Activated CD4-positive, alpha-beta T cell treated with anti-CD3 and anti-CD28 coated beads for 36 hours (primary cell): ENCODE measurements at regions of chrX and their contacts with region 1.

Region 1: GRCh38 chrX:148466292-148466691 is 34.1 kb upstream of the AFF2 start:
- DNase-seq: no peak
- ATAC-seq: peak; percentile 89
- H3K4me3 Mint-ChIP-seq: no peak overlapping the region
- H3K27ac Mint-ChIP-seq: no peak overlapping the region
- H3K4me1 Mint-ChIP-seq: peaks cover 17% of the 10 kb centered on the region
- H3K27me3 Mint-ChIP-seq: peaks cover 4% of the 10 kb centered on the region

Region 2: GRCh38 chrX:148282504-148282903 is 183.8 kb before region 1 on chrX:
- CTCF ChIA-PET with region 1: no interaction called
- POLR2A ChIA-PET with region 1: no interaction called
- intact Hi-C with region 1: loop called in 1 of 2 experiments (anchors 5 kb)
- DNase-seq: no peak
- ATAC-seq: peak; percentile 65
- H3K4me3 Mint-ChIP-seq: no peak overlapping the region
- H3K27ac Mint-ChIP-seq: peak overlapping the region; percentile 37
- H3K4me1 Mint-ChIP-seq: peaks cover 31% of the 10 kb centered on the region
- H3K27me3 Mint-ChIP-seq: no peaks in the 10 kb centered on the region

Region 3: GRCh38 chrX:148380650-148381561 is 85.4 kb before region 1 on chrX:
- CTCF ChIA-PET with region 1: no interaction called
- POLR2A ChIA-PET with region 1: no interaction called
- intact Hi-C with region 1: loop called (anchors 1 kb)
- DNase-seq: peak; percentile 66
- ATAC-seq: peak; percentile 96
- H3K4me3 Mint-ChIP-seq: peak overlapping the region; percentile 62
- H3K27ac Mint-ChIP-seq: peak overlapping the region; percentile 93
- H3K4me1 Mint-ChIP-seq: peaks cover 32% of the 10 kb centered on the region
- H3K27me3 Mint-ChIP-seq: no peaks in the 10 kb centered on the region

Region 4: GRCh38 chrX:148500423-148501385 is 34.4 kb after region 1 on chrX and contains the start of gene AFF2:
- CTCF ChIA-PET with region 1: no interaction called
- POLR2A ChIA-PET with region 1: no interaction called
- intact Hi-C with region 1: loop called (anchors 2 to 5 kb)
- DNase-seq: peak; percentile 71
- ATAC-seq: peak; percentile 80
- H3K4me3 Mint-ChIP-seq: peak within 1 kb of the TSS; percentile 73
- H3K27ac Mint-ChIP-seq: no peak within 1 kb of the TSS
- H3K4me1 Mint-ChIP-seq: peaks cover 14% of the 10 kb centered on the region
- H3K27me3 Mint-ChIP-seq: peaks cover 2% of the 10 kb centered on the region
- total RNA-seq, gene AFF2: 1.3 to 2.2 TPM

Region 5: GRCh38 chrX:148609515-148610327 is 143.4 kb after region 1 on chrX:
- CTCF ChIA-PET with region 1: no interaction called
- POLR2A ChIA-PET with region 1: no interaction called
- intact Hi-C with region 1: loop called in 1 of 2 experiments (anchors 2 kb)
- DNase-seq: peak; percentile 3
- ATAC-seq: peak; percentile 76
- H3K4me3 Mint-ChIP-seq: no peak overlapping the region
- H3K27ac Mint-ChIP-seq: no peak overlapping the region
- H3K4me1 Mint-ChIP-seq: peaks cover 24% of the 10 kb centered on the region
- H3K27me3 Mint-ChIP-seq: no peaks in the 10 kb centered on the region

Region 6: DNA sequence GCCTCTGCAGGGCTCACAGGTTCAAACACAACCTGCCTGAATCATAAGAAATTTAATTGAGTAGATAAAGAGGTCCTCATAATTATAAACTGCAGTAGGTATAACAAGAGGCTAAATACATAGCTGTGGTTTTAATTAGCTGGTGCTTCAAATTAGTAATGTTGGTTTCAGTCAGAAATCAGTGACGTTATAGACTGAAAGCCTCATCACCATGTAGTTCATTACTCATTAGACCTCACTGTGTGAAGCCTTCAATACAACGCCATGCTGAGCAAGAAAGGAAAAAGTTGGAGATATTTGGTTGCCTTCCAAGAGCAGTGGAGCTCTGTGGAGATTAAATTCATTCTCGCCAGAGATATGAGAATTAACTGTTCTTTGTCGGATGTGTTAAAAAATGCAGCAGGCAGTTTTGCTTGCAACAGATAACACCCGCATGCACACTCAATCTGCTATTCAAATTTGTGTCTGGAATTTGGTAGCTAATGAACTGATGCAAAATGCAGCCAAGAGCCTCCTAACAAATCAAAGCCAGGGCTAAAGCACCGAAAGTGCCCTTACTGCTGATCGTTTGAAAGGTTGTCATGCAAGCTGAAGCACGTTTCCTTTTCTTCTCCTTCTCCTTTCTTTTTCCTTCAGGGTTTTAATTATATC is 183.0 kb after region 1 on chrX:
- CTCF ChIA-PET with region 1: no interaction called
- POLR2A ChIA-PET with region 1: no interaction called
- intact Hi-C with region 1: no loop called
- DNase-seq: no peak
- ATAC-seq: no peak
- H3K4me3 Mint-ChIP-seq: no peak overlapping the region
- H3K27ac Mint-ChIP-seq: no peak overlapping the region
- H3K4me1 Mint-ChIP-seq: peaks cover 2% of the 10 kb centered on the region
- H3K27me3 Mint-ChIP-seq: no peaks in the 10 kb centered on the region

Region 7: GRCh38 chrX:148741441-148741840 is 275.1 kb after region 1 on chrX:
- CTCF ChIA-PET with region 1: no interaction called
- POLR2A ChIA-PET with region 1: no interaction called
- intact Hi-C with region 1: no loop called
- DNase-seq: no peak
- ATAC-seq: no peak
- H3K4me3 Mint-ChIP-seq: no peak overlapping the region
- H3K27ac Mint-ChIP-seq: no peak overlapping the region
- H3K4me1 Mint-ChIP-seq: peaks cover 4% of the 10 kb centered on the region
- H3K27me3 Mint-ChIP-seq: no peaks in the 10 kb centered on the region